ENCODE measurements at regions of chr11 and their contacts with region 1.

Region 1: DNA sequence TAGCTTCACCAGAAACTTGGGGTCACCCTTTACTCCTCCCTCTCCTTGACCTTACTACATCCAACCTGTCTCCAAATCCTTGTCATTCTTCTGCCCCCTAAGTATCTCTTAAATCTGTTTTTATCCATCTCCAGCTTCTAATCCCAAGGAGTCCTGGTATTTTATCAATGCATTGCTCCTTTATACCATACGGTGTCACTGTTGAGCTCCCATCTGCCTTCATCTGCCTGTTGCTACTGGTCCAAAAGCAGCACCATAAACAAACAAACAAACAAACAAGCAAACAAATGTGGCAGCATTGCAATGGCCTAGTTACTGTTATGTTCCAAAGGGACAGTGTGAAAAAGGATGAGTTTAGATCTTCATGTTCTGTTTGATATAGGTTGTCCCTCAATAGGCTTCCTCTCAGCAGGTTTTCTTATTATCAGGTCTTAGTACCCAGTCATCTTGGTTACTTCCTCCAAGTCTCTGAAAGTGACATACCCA is 34.2 kb downstream of the DNHD1 start:
- DNase-seq: peak; percentile 21
- H3K4me3 ChIP-seq: no peak overlapping the region
- H3K27ac ChIP-seq: no peak overlapping the region
- H3K4me1 ChIP-seq: no peaks in the 10 kb centered on the region
- H3K27me3 ChIP-seq: no peaks in the 10 kb centered on the region
- CTCF ChIP-seq: peak; percentile 76 to 80

Region 2: GRCh38 chr11:6556139-6556949 is 25.0 kb after region 1 on chr11:
- CTCF ChIA-PET with region 1: no interaction called
- dilution Hi-C with region 1: no loop called
- in situ Hi-C with region 1: no loop called
- intact Hi-C with region 1: no loop called
- DNase-seq: no peak
- H3K4me3 ChIP-seq: no peak overlapping the region
- H3K27ac ChIP-seq: no peak overlapping the region
- H3K4me1 ChIP-seq: peaks cover 7% of the 10 kb centered on the region
- H3K27me3 ChIP-seq: no peaks in the 10 kb centered on the region
- CTCF ChIP-seq: no peak

Region 3: GRCh38 chr11:6667733-6668374 is 136.5 kb after region 1 on chr11:
- CTCF ChIA-PET with region 1: interaction called, 6 read pairs
- dilution Hi-C with region 1: no loop called
- in situ Hi-C with region 1: loop called in 1 of 2 experiments (anchors 10 kb)
- intact Hi-C with region 1: loop called (anchors 1 kb)
- DNase-seq: peak; percentile 12
- H3K4me3 ChIP-seq: no peak overlapping the region
- H3K27ac ChIP-seq: no peak overlapping the region
- H3K4me1 ChIP-seq: no peaks in the 10 kb centered on the region
- H3K27me3 ChIP-seq: no peaks in the 10 kb centered on the region
- CTCF ChIP-seq: peak; percentile 59 to 61

Region 4: DNA sequence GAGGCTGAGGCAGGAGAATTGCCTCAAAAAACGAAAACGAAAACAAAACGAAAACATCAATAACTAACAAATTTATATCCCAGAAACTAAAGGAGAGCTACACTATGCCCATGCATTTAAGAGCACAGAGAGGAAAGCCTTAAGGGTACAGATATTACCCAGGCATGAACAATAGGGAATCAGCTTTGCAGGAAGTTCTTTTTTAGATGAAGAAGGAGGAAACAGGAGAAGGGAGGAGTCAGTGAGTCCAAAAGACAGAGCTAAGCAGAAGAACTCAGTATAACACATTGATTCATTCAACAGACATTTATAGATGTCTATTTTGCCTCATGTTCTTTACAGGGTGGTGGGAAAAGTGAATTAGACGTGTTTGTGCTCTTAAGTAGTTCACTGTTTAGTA is 143.6 kb after region 1 on chr11:
- CTCF ChIA-PET with region 1: no interaction called
- dilution Hi-C with region 1: no loop called
- in situ Hi-C with region 1: loop called (anchors 10 kb)
- intact Hi-C with region 1: no loop called
- DNase-seq: no peak
- H3K4me3 ChIP-seq: no peak overlapping the region
- H3K27ac ChIP-seq: no peak overlapping the region
- H3K4me1 ChIP-seq: no peaks in the 10 kb centered on the region
- H3K27me3 ChIP-seq: no peaks in the 10 kb centered on the region
- CTCF ChIP-seq: no peak

Region 5: GRCh38 chr11:6682936-6683861 is 151.9 kb after region 1 on chr11 and contains the start of gene MRPL17:
- CTCF ChIA-PET with region 1: interaction called, 4 read pairs
- dilution Hi-C with region 1: no loop called
- in situ Hi-C with region 1: loop called (anchors 10 kb)
- intact Hi-C with region 1: loop called (anchors 1 kb)
- DNase-seq: peak; percentile 98
- H3K4me3 ChIP-seq: peak within 1 kb of the TSS; percentile 72 to 98 (median 90)
- H3K27ac ChIP-seq: peak within 1 kb of the TSS; percentile 66
- H3K4me1 ChIP-seq: peaks cover 5% of the 10 kb centered on the region
- H3K27me3 ChIP-seq: no peaks in the 10 kb centered on the region
- CTCF ChIP-seq: peak; percentile 67 to 84
- total RNA-seq, gene MRPL17: 23.8 to 95.9 TPM

Region 6: GRCh38 chr11:6693342-6694228 is 162.3 kb after region 1 on chr11:
- CTCF ChIA-PET with region 1: interaction called, 37 read pairs
- dilution Hi-C with region 1: no loop called
- in situ Hi-C with region 1: loop called in 1 of 2 experiments (anchors 10 kb)
- intact Hi-C with region 1: no loop called
- DNase-seq: peak; percentile 91
- H3K4me3 ChIP-seq: no peak overlapping the region
- H3K27ac ChIP-seq: peak overlapping the region; percentile 16
- H3K4me1 ChIP-seq: peaks cover 7% of the 10 kb centered on the region
- H3K27me3 ChIP-seq: no peaks in the 10 kb centered on the region
- CTCF ChIP-seq: no peak

Region 7: DNA sequence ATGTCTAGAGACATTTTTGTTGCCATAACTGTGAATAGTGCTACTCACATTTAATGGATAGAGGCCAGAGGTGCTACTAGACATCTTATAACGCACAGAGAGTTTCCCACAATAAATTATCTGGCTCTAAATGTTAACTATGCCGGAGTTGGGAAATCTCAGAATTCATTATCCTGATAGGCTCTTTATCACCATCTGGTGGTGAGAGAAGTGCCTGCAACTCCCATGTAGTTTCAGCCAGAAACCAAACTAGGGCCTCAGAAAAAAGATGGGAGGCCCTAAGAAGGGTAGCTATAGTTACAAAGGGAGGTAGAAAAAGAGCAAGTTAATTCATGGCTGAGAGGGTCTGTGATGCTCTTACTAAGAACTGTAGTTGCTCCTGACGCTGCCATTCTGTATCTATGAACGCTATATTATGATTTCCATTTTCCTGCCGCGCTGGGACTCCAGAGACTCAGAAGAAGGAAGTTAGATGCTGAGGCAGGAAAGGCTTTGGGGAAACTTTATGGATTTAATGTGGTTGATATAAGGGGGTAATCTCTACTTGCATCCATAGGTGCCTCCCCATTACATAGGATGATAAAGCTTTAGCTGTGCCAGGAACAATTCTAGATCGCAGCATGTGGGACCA is 174.7 kb after region 1 on chr11:
- CTCF ChIA-PET with region 1: interaction called, 4 read pairs
- dilution Hi-C with region 1: no loop called
- in situ Hi-C with region 1: no loop called
- intact Hi-C with region 1: loop called (anchors 1 kb)
- DNase-seq: peak; percentile 21
- H3K4me3 ChIP-seq: no peak overlapping the region
- H3K27ac ChIP-seq: no peak overlapping the region
- H3K4me1 ChIP-seq: no peaks in the 10 kb centered on the region
- H3K27me3 ChIP-seq: no peaks in the 10 kb centered on the region
- CTCF ChIP-seq: peak; percentile 80 to 91

Region 8: DNA sequence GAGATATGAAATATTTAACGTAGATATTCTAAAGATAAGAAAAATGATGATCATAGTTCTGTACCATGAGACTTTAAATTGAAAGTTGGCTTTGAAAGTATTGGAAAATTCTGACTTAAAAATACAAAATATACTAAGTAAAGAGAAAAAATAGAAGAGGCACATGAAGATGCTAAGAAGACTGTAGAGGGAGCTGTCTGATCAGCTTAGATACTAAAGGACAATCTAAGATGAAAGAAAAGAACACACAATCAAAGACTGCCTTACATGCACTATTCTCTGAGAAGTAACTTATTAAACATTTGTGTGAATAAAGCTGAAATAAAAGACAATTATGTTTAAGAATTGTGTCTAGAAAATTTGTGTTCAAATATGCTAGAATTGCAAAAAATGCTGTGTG is 612.6 kb after region 1 on chr11:
- CTCF ChIA-PET with region 1: no interaction called
- dilution Hi-C with region 1: no loop called
- in situ Hi-C with region 1: no loop called
- intact Hi-C with region 1: no loop called
- DNase-seq: peak; percentile 6
- H3K4me3 ChIP-seq: no peak overlapping the region
- H3K27ac ChIP-seq: no peak overlapping the region
- H3K4me1 ChIP-seq: no peaks in the 10 kb centered on the region
- H3K27me3 ChIP-seq: no peaks in the 10 kb centered on the region
- CTCF ChIP-seq: peak; percentile 43 to 51

Measured in mammary epithelial cell (primary cell).